PC-3 (cell line): ENCODE measurements at regions of chr12 and their contacts with region 1.

Region 1: DNA sequence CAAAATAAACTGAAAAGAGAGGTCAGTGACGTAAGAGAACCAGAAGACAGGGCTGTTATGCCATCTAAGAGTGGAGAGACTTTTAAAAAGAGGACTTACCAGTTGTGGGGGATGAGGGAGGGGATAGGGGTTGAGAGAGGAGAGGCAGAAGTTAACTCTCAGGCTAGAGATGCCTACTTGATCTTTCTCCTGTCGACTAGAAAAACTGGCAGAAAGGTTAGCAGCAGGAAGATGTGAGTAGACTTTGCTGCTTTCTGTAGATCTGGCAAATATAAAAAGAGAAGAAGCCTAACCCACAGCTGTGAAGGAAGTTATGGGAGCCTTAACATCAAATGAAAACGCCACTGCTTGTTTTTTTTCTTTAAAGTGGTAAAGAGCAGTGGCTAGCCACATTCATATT is 10.7 kb downstream of the CREBL2 start:
- DNase-seq: no peak
- ATAC-seq: no peak
- H3K4me3 ChIP-seq: no peak overlapping the region
- H3K27ac ChIP-seq: no peak overlapping the region
- H3K4me1 ChIP-seq: no peaks in the 10 kb centered on the region
- H3K27me3 ChIP-seq: no peaks in the 10 kb centered on the region
- CTCF ChIP-seq: no peak

Region 2: DNA sequence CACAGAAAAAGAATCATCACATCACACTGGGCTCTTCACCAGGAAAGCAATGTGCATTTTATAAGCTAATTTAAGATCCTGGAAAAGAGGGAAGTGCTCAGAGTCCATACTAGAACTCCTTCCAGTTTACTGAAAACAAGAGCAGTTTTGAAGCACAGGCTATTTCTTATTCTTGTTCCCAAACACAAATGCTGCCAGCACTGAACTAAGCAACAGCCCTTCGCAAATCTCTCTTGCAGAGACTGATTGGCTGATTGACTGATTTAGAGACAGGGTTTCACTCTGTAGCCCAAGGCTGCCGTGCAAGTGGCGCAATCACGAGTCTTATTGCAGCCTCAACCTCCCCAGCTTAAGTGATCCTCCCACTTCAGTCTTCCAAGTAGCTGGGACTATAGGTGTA is 506.9 kb before region 1 on chr12:
- CTCF ChIA-PET with region 1: no interaction called
- POLR2A ChIA-PET with region 1: no interaction called
- intact Hi-C with region 1: no loop called
- DNase-seq: no peak
- ATAC-seq: no peak
- H3K4me3 ChIP-seq: no peak overlapping the region
- H3K27ac ChIP-seq: no peak overlapping the region
- H3K4me1 ChIP-seq: no peaks in the 10 kb centered on the region
- H3K27me3 ChIP-seq: no peaks in the 10 kb centered on the region
- CTCF ChIP-seq: no peak

Region 3: GRCh38 chr12:12349711-12350665 is 272.4 kb before region 1 on chr12 and contains the start of gene MANSC1:
- CTCF ChIA-PET with region 1: no interaction called
- POLR2A ChIA-PET with region 1: interaction called, 10 read pairs
- intact Hi-C with region 1: no loop called
- DNase-seq: peak; percentile 58
- ATAC-seq: peak; percentile 69
- H3K4me3 ChIP-seq: peak within 1 kb of the TSS; percentile 76
- H3K27ac ChIP-seq: peak within 1 kb of the TSS; percentile 94
- H3K4me1 ChIP-seq: peaks cover 20% of the 10 kb centered on the region
- H3K27me3 ChIP-seq: no peaks in the 10 kb centered on the region
- CTCF ChIP-seq: no peak; the same call in 1 of the 2 replicates
- total RNA-seq, gene MANSC1: 2.8 and 3.1 TPM in 2 replicates